Lower leg skin (tissue), 4 donors: ENCODE measurements at regions of chr5 and their contacts with region 1.

Region 1: DNA sequence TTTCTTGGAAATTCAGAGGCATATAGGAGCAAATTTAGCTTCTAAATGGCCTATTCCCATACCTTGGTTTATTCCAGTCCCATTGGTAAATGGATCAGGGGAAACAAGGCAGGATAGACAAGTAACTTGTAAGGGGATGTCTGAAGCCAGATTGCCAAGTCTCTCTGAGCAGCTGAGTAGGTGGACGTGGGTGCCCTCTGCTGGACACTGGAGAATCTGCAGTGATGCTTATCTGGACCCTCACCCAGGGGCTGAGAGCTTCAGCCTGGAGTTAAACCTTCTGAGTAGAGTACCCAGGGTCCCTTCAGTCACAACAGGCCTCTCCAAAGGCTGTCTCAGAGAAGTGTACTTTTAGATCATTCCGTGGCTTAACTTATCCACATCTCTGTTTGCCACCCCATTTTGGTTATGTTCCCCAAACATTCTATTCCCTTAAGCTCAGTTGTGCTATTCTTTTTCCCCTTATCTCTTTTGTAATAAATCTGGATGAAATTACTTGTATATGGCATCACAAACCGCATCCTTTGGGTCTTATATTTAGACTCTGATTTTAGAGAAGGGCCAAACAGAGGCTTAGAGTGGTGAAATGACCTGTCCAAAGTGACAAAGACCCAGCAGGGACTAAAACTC is 218.3 kb upstream of the GLRA1 start:
- DNase-seq: peak in 1 of 2 donors; percentile 19
- H3K4me3 ChIP-seq: no peak overlapping the region
- CTCF ChIP-seq: peak in 1 of 3 donors; percentile 26
- POLR2A ChIP-seq: no peak

Region 2: GRCh38 chr5:151819830-151820229 is 323.1 kb before region 1 on chr5:
- intact Hi-C with region 1: loop called (anchors 2 kb)
- DNase-seq: no peak
- H3K4me3 ChIP-seq: no peak overlapping the region
- CTCF ChIP-seq: no peak
- POLR2A ChIP-seq: no peak

Region 3: GRCh38 chr5:152205804-152206203 is 62.8 kb after region 1 on chr5:
- intact Hi-C with region 1: no loop called
- DNase-seq: no peak
- H3K4me3 ChIP-seq: no peak overlapping the region
- CTCF ChIP-seq: no peak
- POLR2A ChIP-seq: no peak